ENCODE measurements at regions of chr7 and their contacts with region 1.

Region 1: DNA sequence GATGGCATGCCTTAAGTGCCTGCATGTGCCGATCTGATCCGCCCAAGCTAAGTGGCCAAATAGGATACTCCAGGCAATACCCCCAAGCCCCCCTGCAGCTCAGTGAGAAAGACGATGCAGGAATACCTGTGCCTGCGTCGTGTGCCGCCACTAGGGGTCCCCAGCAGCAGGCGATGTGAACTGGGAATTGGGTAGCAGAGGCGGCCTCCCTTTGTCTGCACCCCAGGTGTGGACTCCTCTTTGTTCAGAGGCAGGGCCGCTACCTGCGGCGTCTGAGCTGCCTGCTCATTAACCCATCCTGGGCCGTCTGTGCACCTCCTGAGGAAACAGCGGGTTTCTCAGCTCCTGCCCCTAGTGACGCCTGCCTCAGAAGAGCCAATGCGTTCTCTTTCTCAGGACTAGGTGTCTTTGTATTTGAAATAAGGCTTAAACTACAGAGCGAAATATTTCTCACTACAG is 4.8 kb upstream of the CHN2 start:
- DNase-seq: peak; percentile 86
- H3K4me3 Mint-ChIP-seq: no peak overlapping the region
- H3K27ac Mint-ChIP-seq: no peak overlapping the region
- H3K4me1 Mint-ChIP-seq: peaks cover 18% of the 10 kb centered on the region
- H3K27me3 Mint-ChIP-seq: peaks cover 14% of the 10 kb centered on the region
- CTCF ChIP-seq: peak; percentile 97

Region 2: GRCh38 chr7:28973591-28973990 is 216.2 kb before region 1 on chr7:
- CTCF ChIA-PET with region 1: no interaction called
- intact Hi-C with region 1: no loop called
- DNase-seq: no peak
- H3K4me3 Mint-ChIP-seq: no peak overlapping the region
- H3K27ac Mint-ChIP-seq: no peak overlapping the region
- H3K4me1 Mint-ChIP-seq: no peaks in the 10 kb centered on the region
- H3K27me3 Mint-ChIP-seq: peaks cover 13% of the 10 kb centered on the region
- CTCF ChIP-seq: no peak

Region 3: DNA sequence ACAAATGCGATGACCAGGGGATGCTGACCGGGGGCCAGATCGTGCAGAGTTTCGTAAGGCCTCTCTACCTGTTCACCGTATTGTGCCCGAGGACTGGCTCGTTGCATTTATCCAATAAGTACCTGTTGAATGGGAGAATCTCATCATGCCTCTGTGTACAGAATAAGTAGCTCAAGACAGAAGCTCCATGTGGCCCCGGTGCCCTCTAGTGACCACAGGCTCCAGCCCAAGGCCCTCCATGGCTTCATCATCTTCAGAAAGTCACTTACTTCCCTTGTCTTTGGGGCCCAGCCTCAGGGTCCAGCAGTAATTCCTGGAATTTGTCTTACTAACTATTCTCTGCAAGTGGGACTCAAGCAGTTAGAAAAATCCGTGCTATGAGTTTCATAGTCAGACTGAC is 155.8 kb after region 1 on chr7:
- CTCF ChIA-PET with region 1: interaction called, 50 read pairs
- intact Hi-C with region 1: loop called (anchors 1 kb)
- DNase-seq: peak; percentile 81
- H3K4me3 Mint-ChIP-seq: no peak overlapping the region
- H3K27ac Mint-ChIP-seq: no peak overlapping the region
- H3K4me1 Mint-ChIP-seq: no peaks in the 10 kb centered on the region
- H3K27me3 Mint-ChIP-seq: no peaks in the 10 kb centered on the region
- CTCF ChIP-seq: no peak

Region 4: DNA sequence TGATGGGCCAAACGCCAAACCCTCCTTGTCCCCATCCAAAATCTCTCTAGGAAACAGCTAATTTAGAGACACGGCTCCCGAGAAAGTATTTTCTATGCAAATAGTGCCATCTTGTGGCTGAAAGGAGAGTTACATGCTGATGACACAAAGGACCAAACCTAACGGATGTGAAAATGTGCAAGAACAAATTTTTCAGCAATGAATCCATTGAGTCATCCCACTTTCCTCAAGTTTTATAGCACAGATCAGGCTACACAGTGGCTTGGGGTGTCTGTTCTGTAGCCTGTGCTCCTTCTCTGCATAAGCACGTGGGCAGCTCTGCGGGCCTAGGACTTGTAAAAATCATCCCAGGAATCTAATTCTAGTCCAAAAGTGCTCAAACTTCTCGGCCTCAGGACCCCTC is 219.1 kb after region 1 on chr7:
- CTCF ChIA-PET with region 1: interaction called, 21 read pairs
- intact Hi-C with region 1: loop called (anchors 1 kb)
- DNase-seq: peak; percentile 79
- H3K4me3 Mint-ChIP-seq: no peak overlapping the region
- H3K27ac Mint-ChIP-seq: no peak overlapping the region
- H3K4me1 Mint-ChIP-seq: peaks cover 13% of the 10 kb centered on the region
- H3K27me3 Mint-ChIP-seq: no peaks in the 10 kb centered on the region
- CTCF ChIP-seq: peak; percentile 89